Cardiac septum (tissue), 1 donor: ENCODE measurements at regions of chr11 and their contacts with region 1.

Region 1: DNA sequence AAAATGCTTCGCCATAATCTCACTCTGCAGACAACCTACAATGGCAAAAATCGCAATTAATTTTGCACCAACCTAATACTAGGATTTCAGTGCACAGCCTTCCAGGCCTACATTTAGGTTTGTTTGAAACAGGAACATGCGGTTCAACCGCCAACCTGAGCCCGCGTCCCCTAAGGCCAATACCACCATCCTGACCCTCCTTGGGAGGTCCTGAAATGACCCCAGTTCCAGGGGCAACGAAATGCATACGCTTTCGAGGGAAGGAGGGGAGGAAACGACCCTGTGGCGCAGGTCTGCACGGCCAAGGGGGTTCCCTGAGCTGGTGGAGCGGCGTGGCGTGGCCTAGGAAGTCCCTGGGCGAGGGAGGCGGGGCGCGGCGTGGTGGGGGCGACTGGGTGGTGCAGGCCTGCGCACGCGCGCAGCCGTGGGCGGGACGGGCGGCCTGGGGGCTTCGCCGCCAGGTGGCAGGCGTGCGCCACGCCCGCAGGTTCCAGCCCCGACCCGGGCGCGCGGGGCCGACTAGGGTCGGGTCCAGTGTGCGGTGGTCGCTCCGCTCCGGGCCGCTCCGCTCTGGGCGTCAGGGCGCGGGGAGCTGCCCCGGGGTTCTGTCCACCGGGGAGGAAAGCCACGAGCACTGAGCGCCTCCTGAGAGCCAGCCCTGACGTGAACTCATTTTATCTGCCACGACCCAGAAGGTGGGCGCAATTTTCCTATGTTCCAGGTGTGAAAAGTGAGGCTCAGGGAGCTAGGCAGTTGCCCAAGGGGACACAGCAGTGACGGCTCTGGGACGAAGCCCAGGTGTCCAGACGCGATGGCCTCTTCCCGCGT is 94.1 kb downstream of the SWAP70 start:
- DNase-seq: peak; percentile 94

Region 2: GRCh38 chr11:9534791-9535781 is 222.9 kb before region 1 on chr11:
- intact Hi-C with region 1: loop called (anchors 10 kb)
- DNase-seq: peak; percentile 80

Region 3: GRCh38 chr11:9716275-9717039 is 41.6 kb before region 1 on chr11:
- intact Hi-C with region 1: no loop called
- DNase-seq: no peak

Region 4: DNA sequence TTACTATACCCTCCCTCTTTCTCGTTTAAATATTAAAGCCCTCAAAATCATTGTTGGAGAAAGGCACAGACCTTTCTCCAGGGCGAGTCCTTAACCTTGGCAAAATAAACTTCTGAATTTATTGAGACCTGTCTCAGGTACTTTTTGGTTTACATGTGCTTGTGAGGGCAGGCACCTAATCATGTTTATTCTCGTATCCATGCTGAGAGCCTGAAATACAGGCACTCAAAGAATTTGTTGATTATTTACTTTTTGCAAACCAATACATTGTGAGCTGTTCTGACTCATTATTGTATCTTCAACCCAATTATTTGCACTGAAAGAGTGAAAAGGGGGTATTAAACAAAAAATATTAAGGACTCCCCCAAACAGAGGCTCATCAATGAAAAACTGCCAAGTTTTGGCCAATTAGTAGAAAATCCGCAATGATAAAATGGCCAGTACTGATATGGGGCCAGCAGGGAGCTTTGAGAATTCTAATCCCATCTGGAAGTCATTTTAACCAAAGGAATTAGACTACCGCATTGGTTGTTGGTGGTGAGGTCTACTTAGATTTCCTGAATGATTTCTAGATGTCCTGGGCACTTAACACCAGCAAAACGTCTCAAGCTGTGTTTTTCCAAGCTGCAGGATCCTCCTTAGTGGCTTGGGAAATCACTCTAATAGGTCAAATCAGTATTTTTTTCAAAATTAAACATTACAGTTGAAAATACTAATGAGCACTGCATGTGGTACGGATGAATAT is 63.2 kb after region 1 on chr11:
- intact Hi-C with region 1: loop called (anchors 5 kb)
- DNase-seq: no peak

Region 5: DNA sequence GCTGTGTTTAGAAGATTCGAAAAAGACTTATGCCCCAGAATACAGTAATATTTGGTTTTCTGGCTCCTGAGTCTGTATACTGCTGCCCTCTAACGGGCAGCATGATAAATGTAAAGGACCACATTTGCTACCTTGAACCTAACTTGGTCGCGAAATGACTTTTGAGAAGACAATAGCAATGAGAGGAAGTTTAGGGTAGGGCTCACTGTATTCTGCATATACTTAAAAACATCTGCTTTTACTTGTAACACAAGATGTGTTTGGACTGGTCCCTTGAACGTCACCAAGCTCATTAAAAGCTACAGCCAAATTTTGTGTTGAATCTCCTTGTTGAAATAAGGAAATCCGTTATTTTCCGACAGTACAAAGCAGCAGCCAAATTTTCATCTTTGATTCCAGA is 215.0 kb after region 1 on chr11:
- intact Hi-C with region 1: loop called (anchors 1 kb)
- DNase-seq: no peak

Region 6: DNA sequence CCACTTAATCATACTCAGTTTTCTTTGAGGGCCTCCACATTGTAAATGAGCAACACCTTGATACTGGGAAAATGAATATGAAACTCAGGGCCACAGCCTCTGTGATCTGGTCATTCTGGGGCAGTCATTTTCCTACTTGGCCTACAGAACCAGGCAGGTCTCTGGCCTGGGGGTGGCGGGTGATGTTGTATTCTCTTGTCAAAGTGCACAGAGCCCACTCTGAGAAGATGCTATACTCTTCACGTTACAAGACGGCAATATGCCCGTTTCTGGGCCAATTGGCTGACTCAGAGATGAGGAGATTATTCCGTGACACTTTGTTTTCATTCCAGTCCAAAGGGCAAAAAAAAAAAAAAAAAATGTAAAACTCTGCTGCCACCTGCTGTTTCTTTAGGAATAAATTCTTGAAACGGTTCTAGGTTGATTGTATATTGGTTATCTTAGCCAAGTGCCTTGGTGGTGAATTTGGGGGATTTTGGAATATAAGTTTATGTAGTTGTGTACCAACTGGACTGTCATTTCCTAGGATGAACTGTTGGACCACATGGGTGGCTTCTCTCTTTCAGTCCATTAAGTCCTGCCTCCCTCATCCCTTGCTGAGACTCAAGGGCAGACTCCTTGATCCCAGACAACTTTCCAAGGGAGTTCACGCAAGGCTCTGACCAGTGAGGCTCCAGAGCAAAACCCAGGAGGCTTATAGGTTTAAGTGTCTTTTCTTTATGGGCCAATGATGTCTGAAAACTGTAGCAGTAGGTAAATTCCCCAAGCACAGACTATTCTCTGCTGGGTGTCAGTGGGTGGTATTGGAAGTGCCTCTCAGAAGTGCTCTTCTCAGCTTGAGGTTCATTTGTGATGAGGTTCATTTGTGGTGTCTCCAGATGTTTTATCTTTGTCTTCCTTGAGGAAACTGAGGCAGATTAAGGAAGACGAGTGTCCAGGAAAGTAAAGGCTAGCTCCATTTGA is 565.1 kb after region 1 on chr11:
- intact Hi-C with region 1: loop called (anchors 5 kb)
- DNase-seq: no peak

Region 7: DNA sequence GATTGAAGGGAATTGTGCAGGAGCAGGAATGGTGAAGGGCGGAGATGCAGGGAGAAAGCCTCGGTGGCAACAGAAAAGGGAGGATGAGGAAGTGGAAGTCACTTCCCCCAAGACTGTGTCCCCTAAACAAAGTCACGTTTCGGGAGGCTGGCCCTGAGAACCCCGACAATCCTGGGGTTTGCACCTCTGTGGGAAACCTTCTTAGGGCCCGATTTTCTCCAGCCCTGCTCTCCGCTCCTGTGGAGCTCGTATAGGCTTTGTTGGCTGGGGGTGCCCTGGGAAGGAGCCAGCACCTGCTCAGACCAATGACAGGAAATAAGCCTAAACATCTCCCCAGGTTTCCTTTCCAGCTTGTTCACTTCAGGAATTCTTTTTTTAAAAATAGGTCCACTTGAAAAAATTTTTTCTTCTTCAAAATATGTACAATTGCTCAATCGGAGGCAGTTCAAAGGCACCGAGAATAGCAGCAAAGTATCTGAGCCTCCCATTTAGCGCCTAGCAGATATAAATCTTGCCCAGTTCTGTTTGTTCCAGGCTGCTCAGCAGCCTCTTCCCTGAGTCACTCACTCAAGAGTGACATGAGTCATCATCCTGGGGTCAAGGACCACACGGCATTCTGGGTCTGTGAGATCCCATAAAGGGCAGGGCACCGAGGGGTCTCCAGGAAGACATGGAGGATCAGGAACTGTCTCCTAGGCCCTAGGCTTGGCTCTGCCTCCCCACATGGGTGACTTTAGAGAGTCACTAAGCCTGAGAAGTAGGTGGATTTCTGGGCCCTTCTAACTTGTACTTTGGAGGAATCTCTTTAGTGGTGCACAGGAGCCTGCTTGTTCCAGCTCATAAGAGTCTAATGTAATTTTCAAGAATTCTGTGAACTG is 901.6 kb after region 1 on chr11:
- intact Hi-C with region 1: no loop called
- DNase-seq: no peak